ENCODE measurements at regions of chr13 and their contacts with region 1.

Region 1: DNA sequence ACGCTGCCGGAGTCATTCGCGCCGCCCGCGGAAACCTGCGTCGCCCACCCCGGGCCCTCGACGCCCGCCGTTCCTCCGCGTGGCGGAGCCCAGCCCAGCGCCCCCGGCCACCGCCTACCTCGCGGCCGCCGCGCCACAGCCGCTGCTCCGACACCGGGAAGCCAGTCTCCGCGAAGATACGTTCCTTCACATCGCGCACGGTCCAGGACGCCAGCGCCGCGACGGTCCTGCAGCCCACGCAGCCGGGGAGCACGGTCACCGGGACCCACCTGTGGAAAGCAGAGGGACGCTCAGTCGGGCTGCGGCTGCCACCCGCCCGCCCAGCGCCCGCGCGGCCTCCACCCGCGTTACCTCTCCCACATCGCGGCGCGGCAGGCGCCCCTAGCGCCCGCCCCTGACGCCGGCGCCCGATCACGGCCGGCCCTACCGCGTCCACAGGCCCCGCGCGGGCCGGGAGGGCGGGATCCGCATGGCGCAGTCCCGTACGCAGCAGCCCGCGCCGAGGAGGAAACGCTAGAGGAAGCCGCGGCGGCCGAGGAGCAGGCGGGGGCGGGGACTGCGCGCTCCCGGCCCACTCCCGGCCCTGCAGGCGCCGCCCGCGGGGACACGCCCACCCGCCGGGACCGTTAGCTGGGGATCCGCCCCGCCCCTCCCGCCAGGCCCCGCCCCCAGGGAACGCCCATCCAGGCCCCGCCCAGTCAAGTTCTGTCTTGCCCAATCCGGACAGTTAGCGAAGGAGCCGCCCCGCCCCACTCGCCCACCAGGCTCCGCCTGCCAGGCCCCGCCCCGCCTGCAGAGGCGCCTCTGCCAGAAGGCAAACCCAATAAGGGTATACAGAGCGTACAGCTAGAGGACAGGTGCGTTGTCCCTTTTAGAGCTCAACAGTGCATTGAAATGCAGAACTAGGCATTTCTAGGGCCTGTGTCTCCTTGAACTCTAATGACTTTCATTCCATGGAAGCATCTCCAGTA is 58.2 kb downstream of the SACS start:
- DNase-seq: peak; percentile 93
- H3K4me3 ChIP-seq: peak overlapping the region; percentile 89
- H3K27ac ChIP-seq: no peak overlapping the region
- H3K4me1 ChIP-seq: peaks cover 34% of the 10 kb centered on the region
- CTCF ChIP-seq: peak; percentile 33; the same call in 1 of the 2 replicates

Region 2: DNA sequence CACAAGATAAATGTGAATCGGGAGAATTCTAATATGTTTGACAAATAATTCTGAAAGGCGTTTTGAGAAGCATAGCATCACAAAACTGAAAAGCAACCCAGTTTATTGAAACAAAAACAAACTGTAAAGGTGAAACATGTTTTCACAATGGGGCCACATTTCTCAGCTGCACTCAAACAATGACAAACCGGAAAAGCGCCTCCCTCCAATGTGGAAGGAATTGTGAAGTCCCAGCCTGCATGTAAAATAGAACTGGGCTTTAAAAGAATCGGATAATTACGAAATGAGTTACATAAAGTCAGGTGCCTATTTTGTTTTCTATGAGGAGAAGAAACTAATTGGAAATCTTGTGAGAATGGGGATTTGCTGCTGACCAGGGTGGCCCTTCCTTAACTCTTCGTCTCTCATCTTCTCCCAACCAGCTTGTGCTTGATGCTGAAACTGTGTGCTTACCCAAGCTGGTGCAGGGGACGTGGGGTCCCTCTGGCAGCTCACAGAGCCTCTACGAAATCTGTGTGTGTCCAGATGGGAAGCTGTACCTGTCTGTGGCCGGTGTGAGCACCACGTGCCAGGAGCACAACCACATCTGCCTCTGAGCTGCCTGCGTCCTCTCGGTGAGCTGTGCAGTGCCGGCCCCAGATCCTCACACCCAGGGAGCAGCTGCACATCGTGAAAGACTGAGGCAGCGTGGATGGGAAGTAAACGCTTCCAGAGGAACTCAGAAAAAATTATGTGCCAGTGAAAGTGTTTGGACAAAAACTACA is 51.2 kb before region 1 on chr13:
- CTCF ChIA-PET with region 1: interaction called, 12 read pairs
- POLR2A ChIA-PET with region 1: no interaction called
- intact Hi-C with region 1: no loop called
- DNase-seq: no peak
- H3K4me3 ChIP-seq: no peak overlapping the region
- H3K27ac ChIP-seq: no peak overlapping the region
- H3K4me1 ChIP-seq: no peaks in the 10 kb centered on the region
- CTCF ChIP-seq: no peak

Region 3: DNA sequence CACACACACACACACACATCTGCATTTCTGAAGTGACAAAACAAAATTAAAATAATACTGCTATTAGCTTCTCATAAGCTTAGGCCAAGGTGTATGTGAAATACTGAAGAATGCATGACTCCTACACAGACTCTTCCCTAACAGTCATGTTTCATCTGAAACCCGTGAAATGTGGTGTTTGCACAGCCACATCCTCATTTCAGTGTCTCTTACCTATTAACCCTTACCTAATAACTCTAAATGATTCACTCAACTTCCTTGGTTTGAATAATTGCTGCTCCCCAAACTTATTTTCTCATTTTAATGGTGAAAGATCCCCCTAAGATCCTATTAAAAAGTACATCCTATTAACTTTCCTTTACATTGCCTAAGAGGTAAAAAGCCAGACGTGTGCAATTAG is 396.3 kb after region 1 on chr13:
- CTCF ChIA-PET with region 1: no interaction called
- POLR2A ChIA-PET with region 1: no interaction called
- intact Hi-C with region 1: loop called (anchors 10 kb)
- DNase-seq: no peak
- H3K4me3 ChIP-seq: no peak overlapping the region
- H3K27ac ChIP-seq: no peak overlapping the region
- H3K4me1 ChIP-seq: peaks cover 11% of the 10 kb centered on the region
- CTCF ChIP-seq: no peak

Region 4: DNA sequence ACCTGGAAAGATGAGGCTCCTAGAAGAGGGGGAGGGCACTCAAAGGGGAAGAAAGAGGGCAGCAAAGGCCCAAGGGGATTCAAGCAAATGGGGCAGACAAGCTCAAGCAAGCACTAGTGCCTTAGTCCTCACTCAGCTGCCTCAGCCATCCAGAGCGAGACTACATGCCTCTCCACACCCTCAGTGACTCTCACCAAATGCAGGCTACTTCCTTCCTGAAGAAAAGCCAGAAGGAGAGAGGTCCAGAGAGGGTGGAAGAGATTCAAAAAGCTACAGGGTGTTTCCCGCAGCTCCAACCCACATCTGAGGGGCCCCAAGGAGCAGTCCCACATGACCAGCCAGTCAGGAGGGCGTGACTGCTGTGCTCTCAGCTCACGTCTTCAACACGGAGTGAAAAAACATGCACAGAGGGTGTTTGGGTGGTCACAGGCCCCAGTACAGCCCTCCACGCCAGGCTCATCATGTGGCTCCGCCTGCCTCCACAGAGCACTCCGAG is 473.4 kb after region 1 on chr13:
- CTCF ChIA-PET with region 1: no interaction called
- POLR2A ChIA-PET with region 1: no interaction called
- intact Hi-C with region 1: loop called (anchors 10 kb)
- DNase-seq: peak; percentile 53
- H3K4me3 ChIP-seq: no peak overlapping the region
- H3K27ac ChIP-seq: no peak overlapping the region
- H3K4me1 ChIP-seq: peaks cover 28% of the 10 kb centered on the region
- CTCF ChIP-seq: no peak

Region 5: DNA sequence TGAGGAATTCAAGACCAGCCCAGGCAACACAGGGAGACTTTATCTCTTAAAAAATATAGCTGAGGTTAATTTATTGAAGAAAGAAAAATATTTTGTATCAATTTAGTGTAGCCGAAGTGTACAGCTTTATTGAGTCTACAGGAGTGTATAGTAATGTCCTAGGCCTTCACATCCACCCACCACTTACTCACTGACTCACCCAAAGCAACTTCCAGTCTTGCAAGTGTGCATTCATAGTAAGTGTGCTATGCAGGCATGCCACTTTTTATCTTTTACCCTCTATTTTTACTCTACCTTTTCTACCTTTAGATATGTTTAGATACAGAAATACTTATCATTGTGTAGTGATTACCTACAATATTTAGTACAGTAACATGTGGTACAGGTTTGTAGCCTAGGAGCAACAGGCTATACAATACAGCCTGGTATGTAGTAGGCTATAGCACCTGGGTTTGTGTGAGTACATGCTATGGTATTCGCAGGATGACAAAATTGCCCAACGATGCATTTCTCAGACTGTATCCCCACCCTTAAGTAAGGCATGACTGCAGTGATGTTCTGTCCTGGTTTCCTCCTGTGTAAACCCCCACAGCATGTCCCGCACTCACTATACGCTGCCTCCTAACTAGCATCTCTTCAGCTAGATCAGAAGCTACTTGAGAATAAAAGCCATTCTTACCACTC is 1289.6 kb after region 1 on chr13:
- CTCF ChIA-PET with region 1: no interaction called
- POLR2A ChIA-PET with region 1: no interaction called
- intact Hi-C with region 1: loop called (anchors 10 kb)
- DNase-seq: no peak
- H3K4me3 ChIP-seq: no peak overlapping the region
- H3K27ac ChIP-seq: no peak overlapping the region
- H3K4me1 ChIP-seq: peaks cover 57% of the 10 kb centered on the region
- CTCF ChIP-seq: no peak